Natural killer cell (primary cell): ENCODE measurements at regions of chr17 and their contacts with region 1.

Region 1: DNA sequence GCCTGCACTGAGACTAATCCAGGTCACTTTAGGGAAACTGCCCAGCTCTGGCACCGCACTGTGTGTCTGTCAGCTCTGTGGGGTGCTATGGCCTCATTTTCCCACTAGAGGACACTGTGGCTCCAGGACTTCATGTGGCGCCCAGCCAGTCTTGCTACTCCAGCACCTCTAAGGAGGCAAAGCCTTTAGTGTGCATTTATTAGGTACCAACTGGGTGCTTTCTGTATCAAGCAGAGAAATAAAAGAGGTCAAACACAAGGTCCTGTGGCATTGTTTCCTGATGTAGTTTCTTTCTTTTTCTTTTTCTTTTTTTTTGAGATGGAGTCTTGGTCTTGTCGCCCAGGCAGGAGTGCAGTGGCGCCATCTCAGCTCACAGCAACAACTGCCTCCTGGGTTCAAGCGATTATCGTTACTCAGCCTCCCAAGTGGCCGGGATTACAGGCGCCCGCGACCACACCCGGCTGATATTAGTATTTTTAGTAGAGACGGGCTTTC is 12.5 kb upstream of the RHBDL3 start:
- DNase-seq: peak; percentile 60 to 77
- ATAC-seq: peak; percentile 85 to 100 (median 98)
- H3K4me3 ChIP-seq: no peak overlapping the region
- H3K4me3 Mint-ChIP-seq: no peak overlapping the region
- H3K27ac ChIP-seq: no peak overlapping the region
- H3K27ac Mint-ChIP-seq: no peak overlapping the region
- H3K4me1 ChIP-seq: no peaks in the 10 kb centered on the region
- H3K4me1 Mint-ChIP-seq: no peaks in the 10 kb centered on the region
- H3K27me3 ChIP-seq: no peaks in the 10 kb centered on the region
- H3K27me3 Mint-ChIP-seq: peaks cover 0 to 3% of the 10 kb centered on the region in 2 donors
- CTCF ChIP-seq: peak; percentile 84

Region 2: GRCh38 chr17:32319548-32319905 is 66.4 kb after region 1 on chr17:
- intact Hi-C with region 1: loop called (anchors 1 kb)
- DNase-seq: peak; percentile 76 to 84
- ATAC-seq: peak; percentile 90 to 97 (median 95)
- H3K4me3 ChIP-seq: peak overlapping the region; percentile 18
- H3K4me3 Mint-ChIP-seq: peak overlapping the region; percentile 78
- H3K27ac ChIP-seq: no peak overlapping the region
- H3K27ac Mint-ChIP-seq: peak overlapping the region in 1 of 2 donors; percentile 54
- H3K4me1 ChIP-seq: peaks cover 23% of the 10 kb centered on the region
- H3K4me1 Mint-ChIP-seq: peaks cover 0 to 11% of the 10 kb centered on the region in 2 donors
- H3K27me3 ChIP-seq: peaks cover 3% of the 10 kb centered on the region
- H3K27me3 Mint-ChIP-seq: peaks cover 0 to 3% of the 10 kb centered on the region in 2 donors
- CTCF ChIP-seq: peak; percentile 93

Region 3: GRCh38 chr17:32444308-32445073 is 191.3 kb after region 1 on chr17 and contains the start of gene PSMD11:
- intact Hi-C with region 1: loop called (anchors 10 kb)
- DNase-seq: peak; percentile 94 to 98
- ATAC-seq: peak; percentile 91 to 99 (median 97)
- H3K4me3 ChIP-seq: peak within 1 kb of the TSS; percentile 86
- H3K4me3 Mint-ChIP-seq: peak within 1 kb of the TSS; percentile 86
- H3K27ac ChIP-seq: peak within 1 kb of the TSS; percentile 68
- H3K27ac Mint-ChIP-seq: peak within 1 kb of the TSS; percentile 82 to 95
- H3K4me1 ChIP-seq: peaks cover 12% of the 10 kb centered on the region
- H3K4me1 Mint-ChIP-seq: peaks cover 28 to 33% of the 10 kb centered on the region in 2 donors
- H3K27me3 ChIP-seq: no peaks in the 10 kb centered on the region
- H3K27me3 Mint-ChIP-seq: no peaks in the 10 kb centered on the region
- CTCF ChIP-seq: no peak
- total RNA-seq, gene PSMD11: 83.4 to 108 (median 105) TPM

Region 4: DNA sequence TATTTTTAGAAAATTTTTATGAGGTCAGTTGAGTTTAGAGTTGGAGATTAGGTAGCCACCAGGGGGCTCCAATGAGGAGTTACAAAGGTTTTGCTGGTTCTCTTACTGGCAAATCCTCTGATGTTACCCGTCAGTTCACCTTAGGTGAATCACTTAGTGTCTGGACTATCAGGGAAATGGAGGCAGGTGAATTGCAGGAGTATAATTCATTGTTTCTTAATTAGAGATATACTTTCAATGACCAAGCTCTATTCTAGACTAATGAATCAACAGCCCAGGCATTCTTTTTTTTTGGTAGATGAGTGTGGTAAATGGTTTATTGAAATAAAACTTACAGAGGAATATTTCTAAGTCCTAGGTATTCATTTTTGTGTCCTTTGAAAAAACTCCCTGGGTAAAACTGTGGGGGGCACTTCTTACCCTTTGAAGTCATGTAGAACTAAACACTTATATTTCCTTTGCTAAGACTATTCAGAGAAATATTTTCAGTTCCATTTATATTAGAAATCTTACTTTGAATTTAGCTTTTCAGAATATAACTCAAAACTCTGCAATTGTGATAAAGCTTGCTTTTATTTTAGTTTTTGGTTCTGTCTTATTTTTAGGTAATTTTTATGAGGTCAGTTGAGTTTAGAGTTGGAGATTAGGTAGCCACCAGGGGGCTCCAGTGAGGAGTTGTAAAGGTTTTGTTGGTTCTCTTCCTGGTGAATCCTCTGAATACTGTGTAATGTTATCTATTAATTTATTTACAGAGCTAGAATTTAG is 208.9 kb after region 1 on chr17:
- intact Hi-C with region 1: loop called (anchors 2 kb)
- DNase-seq: peak; percentile 52 to 84
- ATAC-seq: peak; percentile 71 to 94 (median 83)
- H3K4me3 ChIP-seq: no peak overlapping the region
- H3K4me3 Mint-ChIP-seq: no peak overlapping the region
- H3K27ac ChIP-seq: no peak overlapping the region
- H3K27ac Mint-ChIP-seq: peak overlapping the region; percentile 13 to 56
- H3K4me1 ChIP-seq: no peaks in the 10 kb centered on the region
- H3K4me1 Mint-ChIP-seq: peaks cover 21 to 22% of the 10 kb centered on the region in 2 donors
- H3K27me3 ChIP-seq: no peaks in the 10 kb centered on the region
- H3K27me3 Mint-ChIP-seq: no peaks in the 10 kb centered on the region
- CTCF ChIP-seq: peak; percentile 77